Adrenal gland (tissue), 19 donors: ENCODE measurements at regions of chr14 and their contacts with region 1.

Region 1: GRCh38 chr14:72516936-72517700 is 376.8 kb downstream of the DPF3 start:
- DNase-seq: peak; percentile 58 to 93 (median 76)
- H3K4me3 ChIP-seq: no peak overlapping the region
- H3K27ac ChIP-seq: no peak overlapping the region
- H3K4me1 ChIP-seq: no peaks in the 10 kb centered on the region
- H3K27me3 ChIP-seq: no peaks in the 10 kb centered on the region
- CTCF ChIP-seq: peak; percentile 90 to 99 (median 95)
- POLR2A ChIP-seq: no peak

Region 2: DNA sequence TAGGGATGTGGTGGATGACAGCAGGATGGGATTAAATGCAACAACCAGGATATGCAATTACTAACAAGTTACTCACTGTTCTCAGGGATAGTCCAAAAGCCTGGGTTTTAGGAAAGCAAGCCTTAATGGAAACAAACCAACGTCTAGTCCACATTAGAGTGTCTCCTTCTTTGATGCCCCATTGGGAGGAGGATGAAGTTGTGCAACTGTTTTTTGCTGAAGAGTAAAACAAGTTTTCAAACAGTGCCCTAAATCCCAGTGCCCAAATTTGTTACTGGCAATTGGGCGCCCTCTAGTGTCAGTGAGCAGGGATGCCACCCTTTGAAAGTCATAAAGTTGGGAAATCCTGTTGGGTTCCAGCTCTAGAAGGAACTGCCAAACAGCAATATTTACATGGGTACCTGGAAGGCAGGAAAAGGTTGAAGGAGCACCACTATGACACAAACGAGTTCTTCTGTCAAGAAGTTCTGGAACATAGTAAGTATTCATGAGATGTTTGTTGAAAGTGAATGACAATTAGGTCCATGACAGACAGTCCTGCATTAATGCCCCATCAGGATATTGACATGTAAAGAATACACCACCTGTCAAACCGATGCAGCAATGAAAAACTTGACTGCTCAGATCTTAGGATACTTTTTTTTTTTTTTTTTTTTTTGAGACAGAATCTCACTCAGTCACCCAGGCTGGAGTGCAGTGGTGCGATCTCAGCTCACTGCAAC is 387.9 kb after region 1 on chr14:
- intact Hi-C with region 1: loop called (anchors 2 to 5 kb)
- DNase-seq: peak; percentile 61 to 88 (median 67)
- H3K4me3 ChIP-seq: no peak overlapping the region
- H3K27ac ChIP-seq: no peak overlapping the region
- H3K4me1 ChIP-seq: peaks cover 0 to 9% of the 10 kb centered on the region in 2 donors
- H3K27me3 ChIP-seq: no peaks in the 10 kb centered on the region
- CTCF ChIP-seq: peak; percentile 90 to 98 (median 96)
- POLR2A ChIP-seq: no peak

Region 3: GRCh38 chr14:72948481-72949138 is 431.5 kb after region 1 on chr14:
- intact Hi-C with region 1: loop called (anchors 5 kb)
- DNase-seq: peak; percentile 51 to 92 (median 78)
- H3K4me3 ChIP-seq: no peak overlapping the region
- H3K27ac ChIP-seq: no peak overlapping the region
- H3K4me1 ChIP-seq: no peaks in the 10 kb centered on the region
- H3K27me3 ChIP-seq: no peaks in the 10 kb centered on the region
- CTCF ChIP-seq: peak; percentile 71 to 94 (median 78)
- POLR2A ChIP-seq: no peak